ENCODE measurements at regions of chr7 and their contacts with region 1.

Region 1: GRCh38 chr7:70681469-70682350 is 450.2 kb upstream of the GALNT17 start:
- DNase-seq: peak; percentile 45
- ATAC-seq: peak; percentile 45
- H3K4me3 Mint-ChIP-seq: peak overlapping the region; percentile 14
- H3K27ac Mint-ChIP-seq: no peak overlapping the region
- H3K4me1 Mint-ChIP-seq: peaks cover 39% of the 10 kb centered on the region
- H3K27me3 Mint-ChIP-seq: no peaks in the 10 kb centered on the region
- CTCF ChIP-seq: no peak

Region 2: GRCh38 chr7:70647801-70648498 is 33.8 kb before region 1 on chr7:
- CTCF ChIA-PET with region 1: no interaction called
- POLR2A ChIA-PET with region 1: no interaction called
- intact Hi-C with region 1: loop called (anchors 5 kb)
- DNase-seq: peak; percentile 97
- ATAC-seq: peak; percentile 95
- H3K4me3 Mint-ChIP-seq: no peak overlapping the region
- H3K27ac Mint-ChIP-seq: peak overlapping the region; percentile 48
- H3K4me1 Mint-ChIP-seq: peaks cover 27% of the 10 kb centered on the region
- H3K27me3 Mint-ChIP-seq: peaks cover 12% of the 10 kb centered on the region
- CTCF ChIP-seq: no peak

Region 3: DNA sequence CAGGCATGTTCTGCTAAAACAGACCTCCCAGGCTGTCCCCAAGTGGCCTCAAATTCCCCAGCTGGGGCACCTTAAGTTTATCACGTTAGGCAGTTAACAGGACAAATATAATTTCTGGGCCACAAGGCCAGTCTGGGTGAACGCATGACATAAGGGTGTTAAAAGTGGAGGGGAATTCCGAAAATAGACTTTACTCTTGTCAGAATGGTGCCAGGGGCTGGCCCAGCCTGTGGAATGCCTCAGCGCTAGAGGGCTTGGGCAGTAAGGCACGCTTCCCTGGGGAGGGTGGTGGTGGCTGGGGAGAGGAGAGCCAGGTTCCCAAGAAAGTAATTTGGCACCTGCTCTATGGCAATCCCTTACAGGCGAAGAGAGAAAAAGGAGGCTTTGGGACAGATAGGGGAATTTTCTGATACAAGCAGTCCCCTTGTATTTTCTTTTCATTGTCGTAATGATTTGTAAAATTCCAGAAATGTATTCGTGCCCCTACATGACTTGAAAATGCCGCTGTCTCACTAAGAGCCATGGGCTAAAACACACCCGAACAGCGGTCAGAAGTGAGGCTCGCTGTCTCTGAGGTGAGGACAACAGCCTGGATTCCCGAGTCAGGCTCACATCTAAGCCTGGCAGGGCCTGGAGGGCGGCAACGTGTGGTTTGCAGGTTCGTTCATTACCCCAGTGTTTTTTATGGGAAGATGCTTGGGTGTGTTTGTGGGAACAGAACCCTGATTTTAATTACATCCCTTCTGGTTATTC is 12.9 kb before region 1 on chr7:
- CTCF ChIA-PET with region 1: no interaction called
- POLR2A ChIA-PET with region 1: no interaction called
- intact Hi-C with region 1: no loop called
- DNase-seq: no peak
- ATAC-seq: no peak
- H3K4me3 Mint-ChIP-seq: no peak overlapping the region
- H3K27ac Mint-ChIP-seq: no peak overlapping the region
- H3K4me1 Mint-ChIP-seq: peaks cover 7% of the 10 kb centered on the region
- H3K27me3 Mint-ChIP-seq: peaks cover 9% of the 10 kb centered on the region
- CTCF ChIP-seq: no peak

Measured in activated CD8-positive, alpha-beta T cell treated with anti-CD3 and anti-CD28 coated beads for 36 hours (primary cell).